ENCODE measurements at regions of chr5 and their contacts with region 1.

Region 1: DNA sequence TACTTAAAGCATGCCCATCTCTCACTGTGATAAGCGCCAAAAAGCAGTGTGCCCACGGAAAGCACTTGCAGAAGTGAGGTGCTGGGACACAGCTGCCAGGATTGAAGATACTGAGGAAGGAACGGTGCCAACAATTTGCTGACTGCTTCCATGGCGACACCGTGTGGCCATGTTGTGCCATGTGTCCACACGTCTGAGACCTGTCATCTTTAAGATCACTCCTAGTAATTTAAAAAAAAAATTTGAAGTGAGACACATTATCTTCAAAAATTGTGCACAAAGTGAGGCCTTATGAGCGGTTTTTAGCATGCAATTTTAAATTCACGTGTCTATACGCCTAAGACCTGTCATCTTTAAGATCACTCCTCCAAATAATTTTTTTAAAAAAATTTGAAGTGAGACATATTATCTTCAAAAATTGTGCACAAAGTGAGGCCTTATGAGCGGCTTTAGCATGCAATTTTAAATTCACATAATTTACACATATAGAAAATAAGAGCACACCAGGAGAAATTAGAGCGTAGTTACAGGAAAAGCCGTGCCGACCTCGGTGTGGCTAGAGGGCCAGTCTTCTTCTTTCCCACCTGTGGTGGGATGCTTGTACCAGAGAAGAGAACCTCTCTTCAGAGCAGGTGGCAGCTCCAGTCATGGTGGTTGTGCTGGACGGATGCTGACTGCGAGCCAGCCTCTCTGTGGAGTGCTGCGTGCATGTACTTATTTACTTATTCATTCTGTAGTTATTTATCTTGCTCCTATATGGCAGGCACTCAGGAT is 21.4 kb upstream of the FLT4 start:
- DNase-seq: peak in 1 of 2 experiments; percentile 62
- H3K4me3 ChIP-seq: no peak overlapping the region
- H3K4me3 Mint-ChIP-seq: no peak overlapping the region
- H3K27ac Mint-ChIP-seq: no peak overlapping the region
- H3K4me1 ChIP-seq: 0 out of 2 replicates have a peak, but pooled peaks cover 5% of the 10 kb centered on the region
- H3K4me1 Mint-ChIP-seq: peaks cover 6% of the 10 kb centered on the region
- H3K27me3 ChIP-seq: no peaks in the 10 kb centered on the region
- H3K27me3 Mint-ChIP-seq: no peaks in the 10 kb centered on the region
- CTCF ChIP-seq: peak; percentile 63 to 90

Region 2: DNA sequence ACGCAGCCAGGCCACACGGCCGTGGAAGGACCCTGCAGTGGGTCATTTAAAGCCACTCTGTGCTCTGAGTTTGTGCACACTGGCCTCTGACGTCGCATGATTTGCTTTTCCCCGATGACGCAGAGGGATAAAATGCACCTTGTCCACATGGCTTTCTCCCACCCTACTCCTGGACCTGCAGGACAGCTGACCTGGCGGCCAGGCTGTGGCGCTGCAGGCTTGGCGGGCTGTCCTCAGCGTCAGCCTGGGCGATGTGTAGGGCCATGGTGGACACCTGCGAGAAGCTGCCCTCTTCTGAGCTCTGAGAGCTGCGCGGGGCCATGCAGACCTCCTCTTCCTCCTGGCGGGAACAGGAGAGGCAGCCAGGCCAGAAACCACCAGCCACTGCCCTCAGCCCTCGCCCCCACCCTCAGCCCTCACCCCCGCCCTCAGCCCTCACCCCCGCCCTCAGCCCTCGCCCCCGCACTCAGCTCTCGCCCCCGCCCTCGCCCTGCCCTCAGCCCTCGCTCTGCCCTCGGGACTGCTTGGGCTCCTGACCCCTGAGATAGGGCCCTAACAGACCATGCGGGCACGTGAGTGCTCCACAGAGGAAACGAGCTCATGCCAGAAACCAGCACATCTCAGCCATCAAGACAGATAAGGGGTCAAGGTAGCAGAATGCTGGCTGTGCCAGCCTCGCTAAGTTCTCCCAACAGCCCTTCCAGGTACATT is 59.5 kb before region 1 on chr5:
- CTCF ChIA-PET with region 1: interaction called, 3 read pairs
- POLR2A ChIA-PET with region 1: no interaction called
- intact Hi-C with region 1: loop called (anchors 2 kb)
- DNase-seq: no peak
- H3K4me3 ChIP-seq: no peak overlapping the region
- H3K4me3 Mint-ChIP-seq: no peak overlapping the region
- H3K27ac Mint-ChIP-seq: no peak overlapping the region
- H3K4me1 ChIP-seq: peaks cover 8% of the 10 kb centered on the region; the same call in 1 of the 2 replicates
- H3K4me1 Mint-ChIP-seq: no peaks in the 10 kb centered on the region
- H3K27me3 ChIP-seq: no peaks in the 10 kb centered on the region
- H3K27me3 Mint-ChIP-seq: peaks cover 3% of the 10 kb centered on the region
- CTCF ChIP-seq: no peak

Region 3: DNA sequence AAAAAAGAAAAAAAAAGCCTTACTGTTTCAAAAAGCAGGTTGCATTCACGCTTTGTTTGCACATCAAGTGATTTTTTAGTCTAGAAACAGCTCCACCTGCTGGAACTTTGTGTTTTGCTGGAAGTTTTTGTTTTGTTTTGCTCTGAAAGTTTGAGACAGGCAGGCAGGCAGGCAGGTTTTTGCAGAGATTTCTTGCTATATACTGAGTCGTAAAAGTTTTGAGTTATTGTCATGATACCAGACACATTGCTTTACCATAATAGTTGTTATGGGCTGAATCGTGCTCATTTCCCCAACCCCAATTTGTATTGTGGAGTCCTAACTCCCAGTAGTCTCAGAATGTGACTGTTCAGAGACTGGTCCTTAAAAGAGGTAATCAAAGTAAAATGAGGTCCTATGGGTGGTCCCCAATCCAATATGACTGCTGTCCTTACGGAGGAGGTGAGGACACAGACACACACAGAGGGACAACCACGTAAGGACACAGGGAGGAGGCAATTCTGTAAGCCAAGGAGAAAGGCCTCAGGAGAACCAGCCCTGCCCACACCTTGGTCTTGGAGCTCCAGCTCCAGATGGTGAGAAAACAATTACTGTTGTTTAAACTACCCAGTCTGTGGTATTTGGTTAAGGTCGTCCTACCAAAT is 48.2 kb after region 1 on chr5:
- CTCF ChIA-PET with region 1: interaction called, 4 read pairs
- POLR2A ChIA-PET with region 1: no interaction called
- intact Hi-C with region 1: loop called (anchors 2 kb)
- DNase-seq: peak in 1 of 2 experiments; percentile 48
- H3K4me3 ChIP-seq: no peak overlapping the region
- H3K4me3 Mint-ChIP-seq: no peak overlapping the region
- H3K27ac Mint-ChIP-seq: no peak overlapping the region
- H3K4me1 ChIP-seq: no peaks in the 10 kb centered on the region
- H3K4me1 Mint-ChIP-seq: no peaks in the 10 kb centered on the region
- H3K27me3 ChIP-seq: no peaks in the 10 kb centered on the region
- H3K27me3 Mint-ChIP-seq: peaks cover 30% of the 10 kb centered on the region
- CTCF ChIP-seq: peak; percentile 53 to 70